IMR-90 (cell line): ENCODE measurements at regions of chr22 and their contacts with region 1.

Region 1: GRCh38 chr22:50200461-50201190 is at the start of gene SELENOO:
- DNase-seq: peak; percentile 77
- ATAC-seq: peak; percentile 92
- H3K4me3 ChIP-seq: peak within 1 kb of the TSS; percentile 92
- H3K27ac ChIP-seq: peak within 1 kb of the TSS; percentile 68; the same call in 1 of the 2 replicates
- H3K4me1 ChIP-seq: peaks cover 4% of the 10 kb centered on the region; the same call in 1 of the 2 replicates
- H3K27me3 ChIP-seq: no peaks in the 10 kb centered on the region
- CTCF ChIP-seq: no peak
- POLR2A ChIP-seq: peak; percentile 62; the same call in 1 of the 2 replicates
- RAD21 ChIP-seq: no peak
- total RNA-seq, gene SELENOO: 10.3 and 10.4 TPM in 2 replicates

Region 2: GRCh38 chr22:49815641-49816071 is 385.0 kb before region 1 on chr22:
- CTCF ChIA-PET with region 1: no interaction called
- POLR2A ChIA-PET with region 1: no interaction called
- dilution Hi-C with region 1: no loop called
- in situ Hi-C with region 1: loop called (anchors 25 kb)
- intact Hi-C with region 1: no loop called
- DNase-seq: peak; percentile 19
- ATAC-seq: peak; percentile 7; the same call in 1 of the 2 replicates
- H3K4me3 ChIP-seq: no peak overlapping the region
- H3K27ac ChIP-seq: no peak overlapping the region
- H3K4me1 ChIP-seq: peaks cover 9% of the 10 kb centered on the region
- H3K27me3 ChIP-seq: no peaks in the 10 kb centered on the region
- CTCF ChIP-seq: no peak
- POLR2A ChIP-seq: no peak
- RAD21 ChIP-seq: no peak

Region 3: DNA sequence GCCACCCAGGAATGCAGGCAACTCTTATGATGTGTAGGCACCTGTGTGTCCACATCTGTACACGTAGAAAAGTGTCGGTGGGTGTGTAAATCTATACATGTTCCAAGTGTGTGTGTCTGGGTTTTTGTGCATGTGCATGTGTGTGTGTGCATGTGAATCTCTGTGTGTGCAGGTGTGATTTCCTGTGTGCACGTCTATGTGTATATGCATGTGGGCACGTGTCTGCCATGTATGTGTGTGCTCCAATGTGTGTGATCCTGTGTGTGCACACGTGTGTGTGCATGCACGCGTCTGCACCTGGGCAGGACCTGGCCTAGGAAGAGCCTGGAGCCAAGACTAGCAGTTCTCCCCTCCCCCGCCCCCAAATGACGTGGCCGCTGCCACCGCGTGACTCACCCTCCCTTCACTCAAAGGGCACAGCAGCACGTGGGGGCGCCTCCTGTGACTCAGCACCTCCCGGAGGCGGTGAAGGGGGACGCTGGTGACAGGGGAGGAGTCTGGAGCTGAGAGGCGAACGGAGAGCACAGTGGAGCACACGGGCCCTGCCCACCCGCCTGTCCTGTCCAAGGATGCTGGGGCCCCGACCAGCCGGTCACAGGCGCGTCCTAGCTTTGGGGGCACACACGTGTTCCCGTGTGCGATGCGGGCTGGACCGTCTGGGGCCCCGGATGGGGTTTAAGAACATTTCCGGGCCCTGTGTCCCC is 229.9 kb before region 1 on chr22:
- CTCF ChIA-PET with region 1: no interaction called
- POLR2A ChIA-PET with region 1: no interaction called
- dilution Hi-C with region 1: no loop called
- in situ Hi-C with region 1: no loop called
- intact Hi-C with region 1: loop called (anchors 10 kb)
- DNase-seq: peak; percentile 97
- ATAC-seq: peak; percentile 89
- H3K4me3 ChIP-seq: peak overlapping the region; percentile 28
- H3K27ac ChIP-seq: peak overlapping the region; percentile 77
- H3K4me1 ChIP-seq: peaks cover 27% of the 10 kb centered on the region
- H3K27me3 ChIP-seq: no peaks in the 10 kb centered on the region
- CTCF ChIP-seq: no peak
- POLR2A ChIP-seq: peak; percentile 89
- RAD21 ChIP-seq: no peak

Region 4: DNA sequence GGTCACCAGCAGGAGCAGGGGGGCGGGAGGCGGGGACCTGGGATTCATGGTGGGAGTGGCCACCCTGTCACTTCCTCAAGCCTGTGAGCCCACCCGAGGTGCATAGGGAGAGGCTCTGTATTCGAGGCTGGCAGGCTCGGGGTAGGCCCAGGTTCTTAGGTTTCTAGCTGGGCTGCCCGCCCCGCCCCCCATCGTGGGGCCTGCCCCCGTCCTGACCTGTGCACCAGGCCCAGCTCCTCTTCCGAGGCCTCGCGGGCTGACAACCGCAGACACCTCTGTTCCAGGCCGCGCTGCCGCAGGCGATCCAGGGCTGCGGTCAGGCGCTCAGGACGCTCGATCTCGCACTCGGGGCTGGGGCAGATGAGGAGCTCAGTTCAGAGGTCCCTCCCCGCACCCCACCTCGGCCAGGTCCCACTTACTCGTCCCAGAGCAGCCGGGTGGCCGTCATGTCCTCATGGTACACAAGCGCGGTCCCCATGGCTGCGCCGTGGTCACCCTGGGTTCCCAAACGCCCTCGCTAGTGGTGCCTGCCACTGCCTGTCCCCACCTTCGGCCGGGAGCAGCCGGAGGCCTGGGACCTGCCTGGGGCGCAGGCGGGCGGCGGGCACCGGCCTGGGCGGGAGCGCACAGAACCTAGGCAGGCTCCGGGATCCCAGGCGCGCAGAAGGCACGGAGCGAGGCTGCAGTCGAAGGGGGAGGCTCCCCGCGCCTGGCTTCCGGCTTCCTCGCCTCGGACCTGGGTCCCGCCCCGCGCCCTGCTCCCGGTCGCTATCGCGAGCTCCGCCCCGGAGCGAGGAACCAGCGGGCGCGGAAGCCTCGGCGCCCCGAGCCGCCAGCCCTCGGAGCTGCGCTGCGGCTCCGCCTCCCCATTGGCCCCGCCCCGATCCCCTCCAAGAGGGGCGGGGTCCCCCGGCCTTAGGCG is 50.2 kb after region 1 on chr22 and contains the start of gene HDAC10:
- CTCF ChIA-PET with region 1: no interaction called
- POLR2A ChIA-PET with region 1: no interaction called
- dilution Hi-C with region 1: no loop called
- in situ Hi-C with region 1: no loop called
- intact Hi-C with region 1: no loop called
- DNase-seq: peak; percentile 74
- ATAC-seq: peak; percentile 84
- H3K4me3 ChIP-seq: peak within 1 kb of the TSS; percentile 88
- H3K27ac ChIP-seq: peak within 1 kb of the TSS; percentile 28
- H3K4me1 ChIP-seq: peaks cover 12% of the 10 kb centered on the region
- H3K27me3 ChIP-seq: no peaks in the 10 kb centered on the region
- CTCF ChIP-seq: no peak
- POLR2A ChIP-seq: no peak
- RAD21 ChIP-seq: no peak
- total RNA-seq, gene HDAC10: 3.6 and 3.9 TPM in 2 replicates